HAP-1 (cell line): ENCODE measurements at regions of chr11 and their contacts with region 1.

Region 1: DNA sequence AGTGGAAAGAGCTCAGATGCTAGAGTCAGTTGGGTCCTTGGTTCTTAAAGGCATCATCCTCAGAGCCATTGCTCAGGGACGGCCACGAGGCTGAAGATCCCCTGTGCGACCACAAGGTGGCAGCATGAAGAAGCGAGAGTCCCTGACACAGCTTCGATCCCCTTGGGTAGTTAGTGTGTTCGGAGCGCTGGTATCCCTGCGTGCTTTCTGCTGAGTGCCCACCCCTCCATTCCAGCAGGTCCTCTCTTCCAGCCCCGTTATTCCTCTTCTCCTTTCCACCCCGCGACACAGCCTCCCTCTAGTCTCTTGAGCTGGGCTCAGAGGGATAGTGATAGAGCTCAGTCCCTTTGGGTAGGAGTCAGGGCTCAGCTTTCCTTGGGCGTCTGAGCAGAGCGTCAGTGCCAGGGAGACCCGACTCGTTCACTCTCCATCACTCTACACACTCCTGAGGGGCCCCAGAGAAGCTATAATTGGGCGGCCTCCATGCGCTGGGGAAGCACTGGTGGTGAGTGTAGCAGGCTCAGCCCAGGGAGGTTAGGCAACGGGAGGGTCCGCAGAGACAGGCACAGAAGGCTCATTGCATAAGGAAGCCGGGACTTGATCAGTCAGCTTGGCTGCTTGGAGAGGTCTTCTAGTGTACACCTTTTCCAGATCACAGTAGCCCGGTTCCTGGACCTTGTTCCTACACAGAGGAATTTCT is at the start of gene OR51D1:
- DNase-seq: peak; percentile 59 to 80
- H3K4me3 ChIP-seq: no peak within 1 kb of the TSS
- H3K4me1 ChIP-seq: no peaks in the 10 kb centered on the region
- H3K27me3 ChIP-seq: peaks cover 3% of the 10 kb centered on the region

Region 2: DNA sequence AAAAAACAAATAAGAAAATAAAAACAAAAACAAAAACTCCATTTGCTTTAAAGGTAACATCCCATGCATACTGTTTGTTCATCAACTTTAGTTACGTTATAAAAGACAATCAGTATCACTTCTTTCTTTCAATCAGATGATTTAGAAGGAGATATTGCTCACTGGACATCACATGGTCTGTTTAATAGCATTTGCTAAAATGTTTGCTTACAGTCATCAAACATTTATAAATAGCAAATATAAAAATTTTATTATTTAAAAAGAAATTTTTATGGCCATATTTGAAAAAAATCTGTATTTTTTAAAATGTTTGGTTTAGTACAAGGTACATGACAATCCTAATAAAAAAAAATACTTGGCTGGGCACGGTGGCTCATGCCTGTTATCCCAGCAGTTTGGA is 90.1 kb after region 1 on chr11:
- in situ Hi-C with region 1: no loop called
- DNase-seq: no peak
- H3K4me3 ChIP-seq: no peak overlapping the region
- H3K4me1 ChIP-seq: no peaks in the 10 kb centered on the region
- H3K27me3 ChIP-seq: no peaks in the 10 kb centered on the region

Region 3: DNA sequence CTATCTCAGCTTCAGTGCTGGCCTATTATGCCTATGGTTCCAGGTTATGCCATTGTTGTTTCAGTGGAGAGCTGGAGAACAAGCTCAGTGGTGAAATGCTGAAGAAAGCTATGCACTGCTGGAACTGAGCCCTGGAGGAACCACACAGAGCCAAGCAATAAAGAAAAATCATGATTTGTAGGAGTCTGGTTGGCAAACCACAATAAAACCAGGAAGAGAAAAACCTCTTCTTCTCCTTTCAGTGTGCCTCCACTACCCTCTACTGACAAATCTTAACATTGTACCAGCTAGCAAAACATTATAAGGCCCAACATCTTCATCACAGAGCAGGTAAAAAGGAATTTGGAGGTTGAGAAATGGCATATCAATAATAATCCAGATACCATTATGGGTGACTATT is 189.3 kb after region 1 on chr11:
- in situ Hi-C with region 1: loop called (anchors 10 kb)
- DNase-seq: no peak
- H3K4me3 ChIP-seq: no peak overlapping the region
- H3K4me1 ChIP-seq: no peaks in the 10 kb centered on the region
- H3K27me3 ChIP-seq: no peaks in the 10 kb centered on the region

Region 4: DNA sequence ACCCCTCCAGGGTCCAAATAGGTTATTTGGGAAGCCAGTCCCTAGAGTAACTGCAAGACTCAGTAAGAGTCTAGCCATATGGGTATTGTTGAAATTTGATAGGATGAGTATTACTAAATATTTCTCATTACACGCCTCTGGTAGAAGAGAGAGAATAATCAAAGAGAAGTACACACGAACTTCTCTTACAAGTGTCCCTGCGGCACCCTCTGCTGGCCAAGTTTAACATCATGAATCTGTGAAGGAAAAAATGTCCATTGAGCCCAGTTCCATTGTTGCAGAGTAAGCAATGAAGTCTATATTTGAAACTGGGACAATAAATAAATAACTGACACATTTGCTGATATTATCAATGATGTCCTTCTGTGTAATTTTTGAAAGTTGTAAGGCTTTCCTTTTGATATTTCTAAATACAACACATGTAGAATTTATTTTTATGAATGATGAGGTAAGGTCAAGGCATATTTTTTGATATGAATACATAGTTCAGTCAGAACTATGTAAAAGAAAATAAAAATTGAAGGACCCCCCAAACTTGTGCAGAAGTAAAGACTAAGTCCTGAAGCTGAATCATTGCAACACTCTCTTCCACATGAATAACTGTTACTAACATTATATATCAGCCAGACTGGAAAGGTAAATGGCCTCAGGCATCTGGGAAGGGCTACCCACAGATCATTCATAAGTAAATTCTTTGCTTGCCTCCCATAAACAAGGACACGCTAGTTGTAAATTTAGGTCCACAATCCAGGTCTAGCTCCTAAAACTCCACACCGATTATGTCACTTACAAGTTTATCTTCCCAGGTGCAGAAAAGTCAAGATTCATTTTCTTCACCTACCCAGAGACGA is 367.5 kb after region 1 on chr11:
- in situ Hi-C with region 1: loop called (anchors 10 kb)
- DNase-seq: peak; percentile 44 to 69
- H3K4me3 ChIP-seq: no peak overlapping the region
- H3K4me1 ChIP-seq: no peaks in the 10 kb centered on the region
- H3K27me3 ChIP-seq: no peaks in the 10 kb centered on the region

Region 5: DNA sequence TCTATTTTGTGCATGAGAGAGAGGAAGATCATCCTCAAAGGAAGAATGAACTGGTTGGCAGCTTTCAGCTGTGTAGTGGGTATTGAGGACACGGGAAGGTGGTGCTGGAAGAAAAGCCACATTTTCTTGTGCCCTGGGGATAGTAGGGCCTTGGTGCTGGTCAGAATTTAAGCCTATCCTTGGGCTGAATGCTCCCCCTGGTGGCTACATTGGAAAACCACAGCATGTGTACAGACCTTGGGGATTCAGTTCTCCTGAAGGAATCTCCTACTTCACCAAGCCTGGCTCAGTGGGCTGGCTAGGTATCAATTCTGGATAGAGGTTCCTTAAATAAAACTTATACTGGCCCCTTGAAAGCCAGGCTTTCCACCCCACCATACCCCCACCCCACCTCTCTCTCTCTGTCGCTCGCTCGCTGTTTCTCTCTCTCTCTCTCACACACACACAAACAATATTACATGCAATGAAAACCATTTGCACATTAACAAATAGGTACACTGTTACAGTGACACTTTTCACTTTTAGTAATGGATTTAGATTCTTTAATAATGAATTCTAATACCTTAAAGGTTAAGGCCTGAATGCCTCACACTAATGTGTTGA is 743.7 kb after region 1 on chr11:
- in situ Hi-C with region 1: loop called (anchors 25 kb)
- DNase-seq: peak; percentile 44 to 68
- H3K4me3 ChIP-seq: no peak overlapping the region
- H3K4me1 ChIP-seq: no peaks in the 10 kb centered on the region
- H3K27me3 ChIP-seq: no peaks in the 10 kb centered on the region

Region 6: GRCh38 chr11:5808500-5809121 is 1171.5 kb after region 1 on chr11 and contains the start of gene OR52N2:
- in situ Hi-C with region 1: loop called (anchors 25 kb)
- DNase-seq: peak; percentile 67 to 82
- H3K4me3 ChIP-seq: peak within 1 kb of the TSS; percentile 12
- H3K4me1 ChIP-seq: no peaks in the 10 kb centered on the region
- H3K27me3 ChIP-seq: peaks cover 8% of the 10 kb centered on the region